ENCODE measurements at regions of chr3 and their contacts with region 1.

Region 1: GRCh38 chr3:86985181-86985826 is 5.6 kb downstream of the VGLL3 start:
- DNase-seq: no peak
- H3K4me3 ChIP-seq: peak overlapping the region; percentile 26
- H3K27me3 ChIP-seq: no peaks in the 10 kb centered on the region
- CTCF ChIP-seq: no peak

Region 2: DNA sequence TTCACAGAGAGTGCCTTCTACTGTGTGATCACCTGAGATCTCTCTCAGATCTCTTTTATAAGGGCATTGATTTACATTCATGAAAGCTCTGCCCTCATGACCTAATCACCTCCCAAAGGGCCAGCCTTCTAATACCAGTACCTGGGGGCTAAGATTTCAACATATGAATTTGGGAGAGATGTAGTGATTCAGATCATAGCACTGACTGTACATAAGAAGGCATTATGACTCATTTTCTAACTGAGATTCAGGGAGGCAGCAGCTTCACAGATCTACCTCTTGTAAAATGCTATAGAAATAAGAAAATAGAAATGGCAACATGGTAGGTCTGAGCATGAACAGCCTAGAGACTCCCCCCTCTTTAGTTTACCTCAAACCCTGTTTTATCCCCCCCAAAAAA is 34.0 kb before region 1 on chr3:
- CTCF ChIA-PET with region 1: interaction called, 5 read pairs
- POLR2A ChIA-PET with region 1: interaction called, 28 read pairs
- DNase-seq: no peak
- H3K4me3 ChIP-seq: no peak overlapping the region
- H3K27me3 ChIP-seq: no peaks in the 10 kb centered on the region
- CTCF ChIP-seq: no peak